AG04450 (cell line): ENCODE measurements at regions of chr1 and their contacts with region 1.

Region 1: DNA sequence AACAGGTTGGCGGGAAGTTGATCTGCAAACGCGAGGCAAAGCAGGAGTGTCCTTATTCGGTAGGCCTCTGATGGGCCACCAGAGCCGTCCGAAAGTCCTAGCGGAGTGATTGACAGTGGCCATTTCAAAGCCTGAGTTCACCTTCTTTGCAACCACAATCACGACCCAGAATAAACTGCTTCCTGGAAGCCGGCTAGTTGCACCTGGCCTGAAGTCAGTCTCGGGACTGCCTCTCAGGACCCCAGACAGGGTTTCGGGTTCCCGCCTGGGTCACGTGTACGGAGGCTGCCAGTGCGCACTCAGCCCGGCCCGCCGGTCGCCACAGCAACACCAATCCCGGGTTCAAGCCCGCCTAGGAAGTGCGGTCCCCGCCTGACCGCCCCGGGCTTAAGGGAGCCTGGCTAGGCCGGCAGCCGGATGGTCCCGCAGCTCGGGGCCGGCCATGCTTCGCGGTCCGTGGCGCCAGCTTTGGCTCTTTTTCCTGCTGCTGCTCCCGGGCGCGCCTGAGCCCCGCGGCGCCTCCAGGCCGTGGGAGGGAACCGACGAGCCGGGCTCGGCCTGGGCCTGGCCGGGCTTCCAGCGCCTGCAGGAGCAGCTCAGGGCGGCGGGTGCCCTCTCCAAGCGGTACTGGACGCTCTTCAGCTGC is at the start of gene TOR3A:
- DNase-seq: peak; percentile 57
- H3K4me3 ChIP-seq: peak within 1 kb of the TSS; percentile 86
- H3K27ac ChIP-seq: peak within 1 kb of the TSS; percentile 77
- H3K27me3 ChIP-seq: no peaks in the 10 kb centered on the region
- CTCF ChIP-seq: no peak
- polyA plus RNA-seq, gene TOR3A: 16.8 and 25.4 TPM in 2 replicates

Region 2: DNA sequence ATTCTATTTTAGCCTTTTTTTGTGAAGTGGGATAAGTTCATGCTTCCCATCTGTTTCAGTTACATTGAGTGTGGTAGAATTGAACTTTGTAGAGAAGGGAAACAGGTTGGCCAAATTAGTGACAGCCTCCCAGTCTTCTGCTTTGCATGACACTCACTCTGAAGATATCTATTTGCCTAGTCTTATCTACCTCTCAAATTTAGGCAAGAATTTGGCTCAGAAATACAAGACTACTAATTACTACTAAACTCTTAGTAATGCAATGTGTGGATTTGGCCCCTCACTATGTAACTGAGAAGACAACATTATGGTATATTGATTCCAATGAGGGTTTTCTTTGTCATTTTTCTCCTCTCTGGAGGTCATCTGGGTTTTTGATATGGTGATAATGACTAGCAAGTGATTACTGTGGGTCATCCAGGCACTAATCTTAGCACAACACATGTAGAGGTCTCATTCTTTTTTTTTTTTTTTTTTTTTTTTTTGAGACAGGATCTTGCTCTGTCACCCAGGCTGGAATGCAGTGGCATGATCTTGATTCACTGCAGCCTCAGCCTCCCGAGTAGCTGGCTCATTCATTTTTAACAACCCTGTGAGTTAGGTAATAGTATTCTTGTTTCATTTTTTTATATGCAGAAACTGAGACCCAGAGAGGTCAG is 49.8 kb before region 1 on chr1:
- CTCF ChIA-PET with region 1: interaction called, 3 read pairs
- POLR2A ChIA-PET with region 1: interaction called, 10 read pairs
- DNase-seq: no peak
- H3K4me3 ChIP-seq: no peak overlapping the region
- H3K27ac ChIP-seq: no peak overlapping the region
- H3K27me3 ChIP-seq: no peaks in the 10 kb centered on the region
- CTCF ChIP-seq: no peak

Region 3: GRCh38 chr1:179107706-179108629 is 26.2 kb after region 1 on chr1:
- CTCF ChIA-PET with region 1: no interaction called
- POLR2A ChIA-PET with region 1: no interaction called
- DNase-seq: no peak
- H3K4me3 ChIP-seq: no peak overlapping the region
- H3K27ac ChIP-seq: no peak overlapping the region
- H3K27me3 ChIP-seq: no peaks in the 10 kb centered on the region
- CTCF ChIP-seq: no peak

Region 4: GRCh38 chr1:179241523-179242097 is 159.8 kb after region 1 on chr1:
- CTCF ChIA-PET with region 1: no interaction called
- POLR2A ChIA-PET with region 1: no interaction called
- DNase-seq: no peak
- H3K4me3 ChIP-seq: no peak overlapping the region
- H3K27ac ChIP-seq: no peak overlapping the region
- H3K27me3 ChIP-seq: no peaks in the 10 kb centered on the region
- CTCF ChIP-seq: no peak

Region 5: DNA sequence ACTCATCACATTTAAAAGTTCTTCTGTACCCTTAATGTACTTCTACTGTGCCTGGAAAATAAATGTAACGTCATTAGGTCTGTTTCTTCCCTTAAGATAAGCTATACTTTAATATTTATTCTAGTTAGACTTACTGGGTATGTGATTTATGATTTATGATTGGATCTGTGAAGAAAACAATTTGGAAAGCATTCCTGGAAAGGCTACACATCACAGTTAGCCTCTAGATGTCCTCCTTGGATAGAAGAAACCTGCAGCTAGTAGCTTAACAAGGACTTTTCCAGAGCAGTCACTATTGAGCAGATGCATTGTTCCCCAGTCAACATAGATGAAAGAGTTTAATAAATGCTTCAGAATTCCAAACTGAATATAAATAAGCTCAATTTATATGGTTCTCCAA is 169.9 kb after region 1 on chr1:
- CTCF ChIA-PET with region 1: interaction called, 13 read pairs
- POLR2A ChIA-PET with region 1: no interaction called
- DNase-seq: no peak
- H3K4me3 ChIP-seq: no peak overlapping the region
- H3K27ac ChIP-seq: no peak overlapping the region
- H3K27me3 ChIP-seq: no peaks in the 10 kb centered on the region
- CTCF ChIP-seq: peak; percentile 53

Region 6: DNA sequence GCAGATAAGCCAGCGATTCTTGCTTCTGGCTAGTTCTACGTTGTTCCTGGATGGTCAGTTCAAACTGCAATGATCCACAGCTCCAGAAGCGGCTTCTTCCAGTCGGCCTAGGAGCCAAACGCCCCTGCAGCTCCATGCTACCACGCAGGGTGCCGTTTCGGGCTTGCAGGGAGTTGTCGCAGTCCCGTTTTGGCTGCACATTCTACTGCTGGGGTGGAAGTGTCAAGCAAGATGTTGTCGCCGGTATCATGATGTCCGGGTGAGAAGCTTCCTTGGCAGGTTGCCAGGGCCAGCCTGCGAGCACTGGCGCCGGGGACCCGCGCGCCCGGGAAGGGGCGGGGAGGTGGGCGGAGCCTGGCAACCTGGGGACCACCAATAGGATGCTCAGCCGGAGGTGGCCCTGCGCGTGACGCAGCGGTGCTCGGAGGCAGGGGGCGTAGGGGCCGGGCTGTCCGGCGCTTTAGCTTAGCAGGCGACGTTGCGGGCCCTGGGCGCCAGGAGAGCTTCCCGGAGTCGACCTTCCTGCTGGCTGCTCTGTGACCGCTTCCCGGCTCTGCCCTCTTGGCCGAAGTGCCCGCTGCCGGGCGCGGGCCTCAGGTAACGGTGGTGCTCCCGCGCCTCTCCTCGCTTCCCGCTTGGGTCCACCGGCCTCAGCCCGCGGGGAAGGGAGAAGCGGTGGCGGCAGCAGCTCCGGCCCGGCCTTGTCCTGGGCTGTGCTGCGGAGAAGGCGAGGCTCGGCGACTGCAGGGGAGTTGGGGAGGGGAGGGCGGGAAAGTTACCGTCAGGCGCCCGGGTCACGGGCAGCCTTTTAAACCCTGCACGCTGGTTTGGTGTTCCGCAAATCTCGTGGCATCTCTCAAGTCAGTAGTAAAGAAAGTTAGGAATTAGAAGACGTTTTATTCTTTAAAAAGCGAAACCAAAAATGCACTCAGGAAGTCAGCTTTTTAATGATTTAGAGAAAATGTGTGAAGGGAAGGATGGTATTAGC is 211.8 kb after region 1 on chr1 and contains the start of gene SOAT1:
- CTCF ChIA-PET with region 1: interaction called, 11 read pairs
- POLR2A ChIA-PET with region 1: interaction called, 3 read pairs
- DNase-seq: peak; percentile 65
- H3K4me3 ChIP-seq: peak within 1 kb of the TSS; percentile 90
- H3K27ac ChIP-seq: peak within 1 kb of the TSS; percentile 87
- H3K27me3 ChIP-seq: no peaks in the 10 kb centered on the region
- CTCF ChIP-seq: peak; percentile 14; the same call in 1 of the 2 replicates
- polyA plus RNA-seq, gene SOAT1: 39.2 and 54.2 TPM in 2 replicates

Region 7: DNA sequence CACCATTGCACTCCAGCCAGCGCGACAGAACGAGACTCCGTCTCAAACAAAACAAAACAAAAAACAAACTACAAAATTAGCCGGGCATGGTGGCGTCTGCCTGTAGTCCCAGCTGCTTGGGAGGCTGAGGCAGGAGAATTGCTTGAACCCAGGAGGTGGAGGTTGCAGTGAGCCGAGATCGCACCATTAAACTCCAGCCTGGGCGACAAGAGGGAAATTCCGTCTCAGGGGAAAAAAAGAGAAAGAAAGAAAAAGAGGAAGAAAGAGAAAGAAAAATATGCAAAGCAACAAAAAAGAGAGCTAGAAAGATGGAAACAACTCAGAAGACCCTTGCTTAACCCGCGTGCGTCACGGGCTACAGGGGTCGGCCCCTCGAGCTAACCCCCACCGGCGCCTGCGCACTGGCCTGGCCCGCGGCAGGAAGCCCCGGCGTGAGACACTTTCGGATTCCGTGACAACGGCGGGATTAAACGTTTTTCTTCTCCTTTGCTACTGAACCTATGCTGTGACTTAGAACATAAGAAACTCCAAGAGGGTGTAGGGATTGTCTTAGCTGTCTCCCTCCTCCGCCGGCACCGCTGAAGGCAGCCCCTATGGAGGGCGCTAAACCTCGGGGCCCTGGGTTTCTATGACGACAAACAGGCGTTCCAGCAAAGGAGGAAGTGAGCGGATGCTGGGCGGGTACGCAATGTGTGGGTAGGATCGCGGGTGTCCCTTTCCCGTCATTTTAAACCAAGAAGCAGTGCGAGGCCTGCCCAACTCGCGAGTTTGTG is 283.7 kb after region 1 on chr1 and contains the start of gene AXDND1:
- CTCF ChIA-PET with region 1: interaction called, 83 read pairs
- POLR2A ChIA-PET with region 1: no interaction called
- DNase-seq: peak; percentile 52
- H3K4me3 ChIP-seq: peak within 1 kb of the TSS; percentile 80
- H3K27ac ChIP-seq: peak within 1 kb of the TSS; percentile 97
- H3K27me3 ChIP-seq: no peaks in the 10 kb centered on the region
- CTCF ChIP-seq: peak; percentile 38
- polyA plus RNA-seq, gene AXDND1: 0.27 TPM in 1 of 2 replicates, not detected in the other